Dendritic cell treated with granulocyte-macrophage colony-stimulating factor and Interleukin-4, amounts not matched to agents 40 ng/mL and 50 ng/mL, for 4 days (primary cell): ENCODE measurements at regions of chr3 and their contacts with region 1.

Region 1: GRCh38 chr3:53122933-53123305 is 7.3 kb downstream of the RFT1 start:
- H3K4me3 Mint-ChIP-seq: no peak overlapping the region
- H3K27ac Mint-ChIP-seq: no peak overlapping the region
- H3K4me1 Mint-ChIP-seq: peaks cover 25% of the 10 kb centered on the region
- H3K27me3 Mint-ChIP-seq: no peaks in the 10 kb centered on the region

Region 2: DNA sequence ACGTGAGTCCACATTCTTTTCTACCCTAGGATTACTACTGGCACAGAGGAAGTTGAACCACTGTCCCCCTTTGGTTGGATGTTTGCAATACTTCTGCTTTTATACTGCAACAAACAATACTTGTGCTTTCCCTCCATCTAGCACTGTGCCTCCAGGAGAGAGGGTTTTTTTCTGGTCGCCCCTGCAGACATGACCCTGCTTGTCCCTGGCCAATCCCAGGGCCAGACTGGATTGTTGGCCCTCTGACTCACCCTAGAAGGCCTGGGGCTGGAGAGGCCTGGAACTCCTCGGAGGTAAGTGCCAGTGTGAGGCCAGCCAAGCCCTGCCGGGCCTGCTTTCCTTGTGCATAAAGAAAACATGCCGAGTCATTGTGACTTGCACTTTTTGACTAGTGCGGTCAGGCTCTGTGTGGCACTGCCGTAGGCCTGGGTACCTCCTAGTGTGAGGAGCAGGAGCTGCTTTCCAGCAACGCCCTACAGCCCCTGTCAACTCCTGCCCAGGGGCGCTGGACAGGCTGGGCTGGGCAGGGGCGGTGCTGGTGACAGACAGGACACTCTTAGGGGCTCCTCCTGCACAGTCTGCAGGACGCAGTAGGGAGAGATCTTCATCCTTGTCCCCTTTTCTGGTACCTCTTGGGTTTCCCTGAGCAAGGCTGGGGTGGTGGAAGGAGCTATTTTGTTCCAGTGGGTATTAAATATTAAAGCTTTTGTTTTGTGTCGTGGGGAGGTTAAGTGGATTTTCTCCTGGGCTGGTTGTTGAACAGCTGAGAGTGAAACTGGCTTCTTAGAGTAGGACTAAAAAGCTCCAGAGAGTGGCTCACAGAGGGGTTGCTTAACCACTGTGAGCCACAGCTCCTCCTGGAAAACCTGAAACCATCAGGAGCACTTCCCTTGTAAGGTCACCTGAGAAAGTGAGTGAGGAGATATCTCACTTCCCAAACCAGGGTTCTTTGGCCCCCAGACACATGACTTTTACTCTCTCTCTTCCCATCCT is 147.3 kb after region 1 on chr3:
- intact Hi-C with region 1: no loop called
- H3K4me3 Mint-ChIP-seq: peak overlapping the region; percentile 74
- H3K27ac Mint-ChIP-seq: peak overlapping the region; percentile 89
- H3K4me1 Mint-ChIP-seq: peaks cover 33% of the 10 kb centered on the region
- H3K27me3 Mint-ChIP-seq: no peaks in the 10 kb centered on the region

Region 3: GRCh38 chr3:53328746-53329145 is 205.8 kb after region 1 on chr3:
- intact Hi-C with region 1: no loop called
- H3K4me3 Mint-ChIP-seq: no peak overlapping the region
- H3K27ac Mint-ChIP-seq: no peak overlapping the region
- H3K4me1 Mint-ChIP-seq: peaks cover 5% of the 10 kb centered on the region
- H3K27me3 Mint-ChIP-seq: no peaks in the 10 kb centered on the region

Region 4: DNA sequence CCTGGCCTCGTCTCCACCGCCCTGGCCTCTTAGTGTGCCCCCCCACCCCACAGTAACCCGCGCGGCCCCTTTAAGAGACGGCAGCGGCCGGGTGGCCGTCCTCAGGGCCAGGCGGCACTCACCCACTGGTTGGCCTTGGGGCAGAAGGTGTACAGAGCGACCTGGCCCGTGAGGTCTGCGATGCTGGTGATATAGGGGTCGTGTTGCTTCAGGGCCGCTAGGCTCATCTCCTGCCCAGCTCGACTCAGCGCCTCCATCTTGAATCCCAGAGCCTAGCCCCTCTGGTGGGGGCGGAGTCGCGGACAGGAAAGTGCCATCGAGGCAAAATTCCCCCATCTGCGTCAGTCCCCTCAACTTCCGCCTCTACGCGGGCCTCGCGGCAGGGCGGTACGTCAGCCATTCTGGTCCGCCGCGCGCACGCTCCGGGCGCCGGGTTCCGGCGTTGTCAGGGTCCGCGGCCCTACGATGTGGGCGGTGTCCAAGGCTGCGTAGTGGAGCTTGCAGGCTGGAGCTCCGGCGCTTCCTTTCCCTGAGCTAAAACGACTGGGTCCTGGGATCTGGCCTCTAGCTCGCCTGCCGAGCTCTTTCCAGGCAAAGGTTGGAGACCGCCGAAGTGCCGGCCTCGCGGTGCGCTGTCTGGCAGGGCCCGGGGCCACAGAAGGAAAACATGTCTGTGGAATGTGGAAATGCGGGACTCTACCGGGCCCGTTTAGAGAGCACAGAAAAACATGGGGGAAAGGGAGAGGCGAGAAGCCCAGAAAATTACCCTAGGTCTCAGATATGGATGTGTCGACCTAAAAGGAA is 224.5 kb after region 1 on chr3 and contains the start of gene DCP1A:
- intact Hi-C with region 1: loop called (anchors 10 kb)
- H3K4me3 Mint-ChIP-seq: peak within 1 kb of the TSS; percentile 98
- H3K27ac Mint-ChIP-seq: peak within 1 kb of the TSS; percentile 96
- H3K4me1 Mint-ChIP-seq: peaks cover 32% of the 10 kb centered on the region
- H3K27me3 Mint-ChIP-seq: no peaks in the 10 kb centered on the region